ENCODE measurements at regions of chr10 and their contacts with region 1.

Region 1: GRCh38 chr10:97553575-97554031 is 19.0 kb upstream of the ANKRD2 start:
- DNase-seq: peak; percentile 57
- H3K4me3 ChIP-seq: no peak overlapping the region
- H3K27ac ChIP-seq: no peak overlapping the region
- H3K4me1 ChIP-seq: no peaks in the 10 kb centered on the region
- CTCF ChIP-seq: peak; percentile 78

Region 2: DNA sequence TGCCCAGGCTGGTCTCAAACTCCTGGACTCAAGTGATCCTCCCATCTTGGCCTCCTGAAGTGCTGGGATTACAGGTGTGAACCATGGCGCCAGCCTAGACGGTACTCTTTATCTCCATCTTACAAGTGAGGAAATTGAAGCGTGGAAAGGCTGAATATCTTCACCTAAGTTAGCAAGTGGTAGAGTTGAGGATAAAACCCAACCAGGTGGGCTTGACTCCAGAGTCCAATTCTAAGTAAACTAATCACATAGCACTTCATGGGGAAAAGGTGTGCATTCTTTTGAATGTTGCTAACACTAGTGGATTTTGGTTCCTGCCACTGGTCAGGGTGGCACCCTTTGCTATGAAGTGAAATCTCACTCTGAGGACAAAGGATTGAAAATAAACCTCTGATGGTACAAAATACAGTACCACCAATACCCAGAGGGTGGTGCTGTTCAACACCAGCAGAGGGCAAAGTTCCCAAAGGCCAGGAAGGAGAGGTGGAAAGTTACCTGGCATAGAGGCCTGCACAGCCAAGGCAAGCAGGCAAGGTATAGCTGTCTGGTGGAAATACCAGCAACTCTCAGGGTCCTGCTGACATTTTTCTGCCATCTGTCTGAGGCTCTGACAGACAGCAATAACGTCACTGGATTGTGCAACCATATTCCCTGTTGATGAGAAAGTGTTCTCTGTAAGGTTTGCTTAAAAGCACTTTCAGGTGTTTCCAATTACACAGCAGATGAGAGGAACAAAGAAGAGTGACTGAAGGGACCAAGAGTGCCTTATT is 90.1 kb before region 1 on chr10:
- CTCF ChIA-PET with region 1: no interaction called
- POLR2A ChIA-PET with region 1: interaction called, 3 read pairs
- intact Hi-C with region 1: loop called (anchors 1 kb)
- DNase-seq: peak; percentile 56
- H3K4me3 ChIP-seq: no peak overlapping the region
- H3K27ac ChIP-seq: no peak overlapping the region
- H3K4me1 ChIP-seq: peaks cover 10% of the 10 kb centered on the region
- CTCF ChIP-seq: peak; percentile 97

Region 3: GRCh38 chr10:97498076-97498840 is 55.3 kb before region 1 on chr10 and contains the start of gene MMS19:
- CTCF ChIA-PET with region 1: no interaction called
- POLR2A ChIA-PET with region 1: no interaction called
- intact Hi-C with region 1: no loop called
- DNase-seq: peak; percentile 97
- H3K4me3 ChIP-seq: peak within 1 kb of the TSS; percentile 81
- H3K27ac ChIP-seq: peak within 1 kb of the TSS; percentile 85
- H3K4me1 ChIP-seq: peaks cover 42% of the 10 kb centered on the region
- CTCF ChIP-seq: no peak
- total RNA-seq, gene MMS19: 74.4 and 95.7 TPM in 2 replicates

Region 4: GRCh38 chr10:97659589-97659988 is 106.0 kb after region 1 on chr10:
- CTCF ChIA-PET with region 1: no interaction called
- POLR2A ChIA-PET with region 1: interaction called, 10 read pairs
- intact Hi-C with region 1: no loop called
- DNase-seq: no peak
- H3K4me3 ChIP-seq: no peak overlapping the region
- H3K27ac ChIP-seq: no peak overlapping the region
- H3K4me1 ChIP-seq: no peaks in the 10 kb centered on the region
- CTCF ChIP-seq: no peak

Measured in OCI-LY7 (cell line).